GM12878 (cell line): ENCODE measurements at regions of chr6 and their contacts with region 1.

Region 1: GRCh38 chr6:18122124-18123093 is at the start of gene NHLRC1:
- DNase-seq: peak; percentile 13
- ATAC-seq: peak; percentile 94
- H3K4me3 ChIP-seq: no peak within 1 kb of the TSS; the same call in 1 of the 2 replicates
- H3K27ac ChIP-seq: no peak within 1 kb of the TSS
- H3K4me1 ChIP-seq: no peaks in the 10 kb centered on the region
- H3K27me3 ChIP-seq: no peaks in the 10 kb centered on the region
- CTCF ChIP-seq: peak; percentile 53 to 77 (median 73)
- EP300 ChIP-seq: no peak
- POLR2A ChIP-seq: peak; percentile 74
- RAD21 ChIP-seq: peak; percentile 74
- polyA plus RNA-seq, gene NHLRC1: 0.04 TPM in 1 of 2 experiments, not detected in the other

Region 2: DNA sequence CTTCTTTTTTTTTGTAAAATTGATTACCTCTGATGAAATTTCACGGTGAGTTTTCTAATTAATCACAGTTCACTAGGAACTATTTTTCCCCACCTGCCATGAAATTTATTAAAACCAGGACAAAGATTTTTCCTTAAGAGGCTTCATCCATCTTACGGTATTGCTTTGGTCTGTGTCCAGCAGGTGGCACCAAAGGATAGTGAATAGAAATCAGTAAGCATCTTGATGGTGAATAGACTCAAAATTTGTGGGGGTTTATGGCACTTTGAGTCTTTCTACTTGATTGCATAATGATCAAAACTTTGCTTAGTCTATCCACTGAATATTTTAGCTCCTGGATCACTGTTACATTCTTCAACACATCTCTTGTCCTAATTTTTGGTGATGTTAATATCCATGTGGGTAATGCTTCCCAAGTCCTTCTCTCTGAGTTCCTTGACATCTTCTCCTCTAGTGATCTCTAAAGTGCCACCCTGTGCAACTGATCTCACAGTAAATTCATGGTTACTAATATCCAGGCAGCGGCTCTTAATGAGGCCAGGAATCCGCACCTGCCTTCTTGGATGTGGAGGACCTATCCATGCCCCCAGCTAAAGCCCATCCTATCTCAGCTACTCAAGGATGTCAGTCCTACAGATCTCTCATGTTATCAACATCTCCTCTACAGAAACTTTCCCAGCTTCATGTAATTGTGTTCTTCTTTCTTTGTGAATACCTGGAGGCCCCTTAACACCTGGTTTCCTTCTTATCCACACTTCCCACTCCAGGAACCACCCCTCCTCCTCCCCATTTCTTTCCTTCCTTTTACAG is 966.1 kb before region 1 on chr6:
- CTCF ChIA-PET with region 1: no interaction called
- POLR2A ChIA-PET with region 1: no interaction called
- RAD21 ChIA-PET with region 1: no interaction called
- SMC1A ChIA-PET with region 1: no interaction called
- in situ Hi-C with region 1: no loop called
- intact Hi-C with region 1: loop called (anchors 10 kb)
- DNase-seq: peak; percentile 20
- ATAC-seq: peak; percentile 79
- H3K4me3 ChIP-seq: no peak overlapping the region
- H3K27ac ChIP-seq: no peak overlapping the region
- H3K4me1 ChIP-seq: no peaks in the 10 kb centered on the region
- H3K27me3 ChIP-seq: no peaks in the 10 kb centered on the region
- CTCF ChIP-seq: peak; percentile 61 to 79 (median 66); a peak in 5 of 6 replicates
- EP300 ChIP-seq: no peak
- POLR2A ChIP-seq: no peak
- RAD21 ChIP-seq: peak; percentile 94

Region 3: GRCh38 chr6:17820055-17820454 is 302.4 kb before region 1 on chr6:
- CTCF ChIA-PET with region 1: no interaction called
- POLR2A ChIA-PET with region 1: no interaction called
- RAD21 ChIA-PET with region 1: no interaction called
- SMC1A ChIA-PET with region 1: no interaction called
- in situ Hi-C with region 1: no loop called
- intact Hi-C with region 1: loop called (anchors 10 kb)
- DNase-seq: no peak
- ATAC-seq: peak; percentile 60; the same call in 2 of the 3 replicates
- H3K4me3 ChIP-seq: no peak overlapping the region
- H3K27ac ChIP-seq: no peak overlapping the region
- H3K4me1 ChIP-seq: no peaks in the 10 kb centered on the region
- H3K27me3 ChIP-seq: no peaks in the 10 kb centered on the region
- CTCF ChIP-seq: no peak
- EP300 ChIP-seq: no peak
- POLR2A ChIP-seq: no peak
- RAD21 ChIP-seq: no peak

Region 4: DNA sequence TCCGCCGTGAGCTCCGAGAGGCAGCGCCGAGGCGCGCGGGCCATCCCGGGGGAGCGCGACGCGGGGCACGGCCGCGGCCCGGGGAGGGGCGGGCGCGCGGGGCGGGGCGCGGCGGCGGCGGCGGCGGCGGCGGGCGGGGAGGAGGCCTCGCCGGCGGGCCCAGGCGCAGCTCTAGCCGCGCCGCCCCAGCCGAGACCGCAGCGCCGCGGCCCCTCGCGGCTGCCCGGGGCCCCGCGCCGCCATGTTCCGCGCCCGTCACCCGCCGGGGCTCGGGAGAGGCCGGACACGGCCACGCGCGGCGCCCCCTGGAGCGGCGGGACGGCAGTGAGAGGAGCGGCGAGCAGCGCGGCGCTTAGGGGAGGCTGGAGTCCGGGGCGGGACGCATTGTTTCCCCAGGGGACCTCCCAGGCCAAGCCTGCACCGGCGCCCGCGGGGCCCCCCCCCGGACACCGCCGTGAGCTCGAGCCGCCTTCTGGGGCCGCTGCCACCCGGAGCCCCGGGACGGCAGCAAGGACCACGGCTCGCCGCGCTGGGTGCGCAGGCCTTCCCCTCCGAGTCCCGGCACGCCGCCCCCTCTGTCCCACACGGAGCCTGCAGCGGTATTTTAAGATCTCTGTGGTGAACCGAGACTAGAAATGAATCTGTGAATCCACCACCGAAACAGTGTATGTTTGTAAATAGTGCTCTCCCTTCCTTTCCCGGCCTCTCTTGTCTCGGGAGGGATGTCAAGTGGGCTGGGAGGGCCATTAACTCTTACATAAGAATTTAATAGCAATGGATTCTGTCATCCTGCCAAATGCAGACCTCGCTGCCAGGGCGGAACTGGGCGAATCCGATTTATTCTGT is 134.6 kb before region 1 on chr6 and contains the start of gene KIF13A:
- CTCF ChIA-PET with region 1: no interaction called
- POLR2A ChIA-PET with region 1: no interaction called
- RAD21 ChIA-PET with region 1: no interaction called
- SMC1A ChIA-PET with region 1: no interaction called
- in situ Hi-C with region 1: no loop called
- intact Hi-C with region 1: loop called (anchors 5 kb)
- DNase-seq: no peak
- ATAC-seq: peak; percentile 88
- H3K4me3 ChIP-seq: peak within 1 kb of the TSS; percentile 68; the same call in 1 of the 2 replicates
- H3K27ac ChIP-seq: no peak within 1 kb of the TSS
- H3K4me1 ChIP-seq: peaks cover 6% of the 10 kb centered on the region
- H3K27me3 ChIP-seq: peaks cover 6 to 21% of the 10 kb centered on the region in 2 experiments
- CTCF ChIP-seq: peak in 2 of 3 experiments; percentile 10 to 14; a peak in 2 of 6 replicates
- EP300 ChIP-seq: no peak
- POLR2A ChIP-seq: 0 out of 2 replicates have a peak, but pooled peaks have one; percentile 22
- RAD21 ChIP-seq: no peak
- polyA plus RNA-seq, gene KIF13A: 0.02 to 0.07 TPM

Region 5: DNA sequence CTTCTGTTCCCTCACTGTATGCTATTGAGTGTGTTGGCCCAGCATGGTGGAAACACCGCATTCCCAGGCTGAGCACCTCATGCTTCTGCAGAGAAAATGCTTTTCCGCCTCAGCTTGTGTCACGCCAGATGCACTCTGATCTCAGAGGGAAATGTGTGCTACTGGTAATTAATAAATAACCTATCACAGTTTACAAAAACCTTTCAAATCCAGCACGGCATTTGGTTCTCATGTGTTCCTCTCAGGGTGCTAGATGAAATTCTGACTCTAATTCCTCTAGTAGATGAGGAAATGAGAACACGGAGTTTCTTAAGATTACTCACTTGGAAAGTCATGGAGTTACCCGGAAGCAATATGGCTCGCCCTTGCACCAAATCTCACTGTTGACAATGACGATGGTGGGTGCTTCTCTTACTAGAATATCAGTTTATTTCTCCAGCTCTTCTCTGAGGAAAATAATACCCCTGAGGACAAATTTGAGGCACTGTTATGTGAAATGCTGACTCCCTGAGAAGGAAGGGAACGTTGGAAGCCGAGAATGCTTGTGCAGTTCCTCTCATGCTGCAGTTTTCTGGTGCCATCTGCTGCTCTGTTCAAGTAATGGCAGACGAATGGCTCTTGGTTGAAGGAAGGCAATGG is 381.3 kb after region 1 on chr6:
- CTCF ChIA-PET with region 1: interaction called, 6 read pairs
- POLR2A ChIA-PET with region 1: no interaction called
- RAD21 ChIA-PET with region 1: interaction called, 3 read pairs
- SMC1A ChIA-PET with region 1: interaction called, 7 read pairs
- in situ Hi-C with region 1: no loop called
- intact Hi-C with region 1: loop called (anchors 10 kb)
- DNase-seq: peak; percentile 35
- ATAC-seq: peak; percentile 94
- H3K4me3 ChIP-seq: no peak overlapping the region
- H3K27ac ChIP-seq: no peak overlapping the region
- H3K4me1 ChIP-seq: no peaks in the 10 kb centered on the region
- H3K27me3 ChIP-seq: no peaks in the 10 kb centered on the region
- CTCF ChIP-seq: peak; percentile 87 to 96 (median 90); a peak in 5 of 6 replicates
- EP300 ChIP-seq: peak in 1 of 2 experiments; percentile 16; a peak in 1 of 4 replicates
- POLR2A ChIP-seq: no peak
- RAD21 ChIP-seq: peak; percentile 100